Gastrocnemius medialis (tissue), 4 donors: ENCODE measurements at regions of chr11 and their contacts with region 1.

Region 1: DNA sequence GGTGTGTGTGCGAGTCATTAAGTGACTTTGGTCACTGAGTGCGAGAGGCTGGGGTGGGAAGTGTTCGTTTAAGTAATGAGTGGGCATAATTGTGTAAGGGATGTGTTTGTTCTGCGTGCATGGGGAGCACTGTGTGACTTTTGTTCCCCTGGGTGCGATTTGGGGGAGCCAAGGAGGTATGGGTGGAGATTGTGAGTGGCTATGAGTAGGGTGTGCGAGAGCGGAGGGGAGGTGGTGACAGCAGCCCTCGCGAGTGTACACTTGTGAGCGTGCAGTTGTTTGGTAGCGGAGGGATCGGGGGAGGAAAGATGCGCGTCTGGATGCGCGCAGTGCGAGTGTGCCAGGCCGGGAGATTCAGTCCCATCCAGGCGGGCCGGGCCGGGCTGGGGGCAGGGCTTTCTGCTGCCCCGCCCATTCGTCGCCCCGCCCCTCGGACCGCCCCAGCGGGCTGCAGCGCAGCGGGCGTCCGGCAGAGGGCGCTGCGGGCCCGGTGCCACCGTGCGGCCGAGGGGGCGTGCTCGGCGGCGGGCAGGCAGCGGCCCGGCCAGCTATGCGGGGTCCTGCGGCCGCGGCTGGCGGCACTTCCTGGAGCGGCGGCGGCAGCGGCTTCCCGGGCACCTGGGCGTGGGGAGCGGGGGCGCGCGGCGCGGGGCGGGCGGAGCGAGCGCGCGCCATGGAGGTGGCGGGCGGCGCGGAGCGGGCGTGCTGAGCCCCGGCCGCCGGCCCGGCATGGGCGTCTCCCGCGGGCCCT is at the start of gene DGKZ:
- DNase-seq: peak; percentile 59 to 82
- ATAC-seq: peak; percentile 76 to 81
- H3K4me3 ChIP-seq: peak within 1 kb of the TSS; percentile 68 to 82 (median 75)
- H3K27ac ChIP-seq: peak within 1 kb of the TSS; percentile 70 to 79 (median 74)
- H3K4me1 ChIP-seq: peaks cover 18 to 30% of the 10 kb centered on the region in 2 donors
- H3K27me3 ChIP-seq: no peaks in the 10 kb centered on the region
- CTCF ChIP-seq: peak; percentile 62 to 99 (median 99)
- POLR2A ChIP-seq: peak; percentile 64 to 85
- total RNA-seq, gene DGKZ: 127 to 155 (median 131) TPM

Region 2: GRCh38 chr11:46075168-46075567 is 271.9 kb before region 1 on chr11:
- in situ Hi-C with region 1: no loop called
- intact Hi-C with region 1: no loop called
- DNase-seq: no peak
- ATAC-seq: no peak
- H3K4me3 ChIP-seq: no peak overlapping the region
- H3K27ac ChIP-seq: no peak overlapping the region
- H3K4me1 ChIP-seq: peaks cover 5 to 9% of the 10 kb centered on the region in 2 donors
- H3K27me3 ChIP-seq: no peaks in the 10 kb centered on the region
- CTCF ChIP-seq: no peak
- POLR2A ChIP-seq: no peak

Region 3: GRCh38 chr11:46361283-46362155 is 14.5 kb after region 1 on chr11:
- in situ Hi-C with region 1: no loop called
- intact Hi-C with region 1: loop called (anchors 1 kb)
- DNase-seq: peak; percentile 85 to 94
- ATAC-seq: peak; percentile 69 to 74
- H3K4me3 ChIP-seq: peak overlapping the region; percentile 67 to 77 (median 74)
- H3K27ac ChIP-seq: peak overlapping the region; percentile 98 to 100 (median 98)
- H3K4me1 ChIP-seq: peaks cover 60 to 61% of the 10 kb centered on the region in 2 donors
- H3K27me3 ChIP-seq: no peaks in the 10 kb centered on the region
- CTCF ChIP-seq: peak in 1 of 5 experiments; percentile 10
- POLR2A ChIP-seq: peak; percentile 94 to 96